Uterus (tissue), 4 donors: ENCODE measurements at regions of chr22 and their contacts with region 1.

Region 1: GRCh38 chr22:23925020-23925606 is 30.9 kb downstream of the MIF start:
- DNase-seq: no peak
- H3K4me3 ChIP-seq: no peak overlapping the region
- H3K27ac ChIP-seq: no peak overlapping the region
- H3K4me1 ChIP-seq: no peaks in the 10 kb centered on the region
- H3K27me3 ChIP-seq: no peaks in the 10 kb centered on the region
- CTCF ChIP-seq: no peak
- POLR2A ChIP-seq: no peak

Region 2: DNA sequence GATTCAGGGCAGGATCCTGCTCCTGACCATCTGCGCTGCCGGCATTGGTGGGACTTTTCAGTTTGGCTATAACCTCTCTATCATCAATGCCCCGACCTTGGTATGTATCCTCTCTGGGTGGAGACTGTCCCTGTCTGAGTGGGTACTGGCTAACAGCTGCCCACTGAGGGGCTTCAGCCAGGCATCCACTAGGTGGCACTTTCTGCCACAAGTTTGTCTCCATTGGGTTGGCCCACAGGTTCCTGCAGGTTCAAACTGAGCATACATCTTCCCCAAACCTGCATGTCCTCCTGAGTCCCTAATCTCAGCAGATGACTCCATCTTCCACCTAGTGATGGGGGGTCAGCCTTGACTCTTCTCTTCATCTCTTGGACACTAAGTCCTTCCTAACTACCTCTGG is 63.0 kb before region 1 on chr22:
- intact Hi-C with region 1: no loop called
- DNase-seq: no peak
- H3K4me3 ChIP-seq: no peak overlapping the region
- H3K27ac ChIP-seq: no peak overlapping the region
- H3K4me1 ChIP-seq: no peaks in the 10 kb centered on the region
- H3K27me3 ChIP-seq: no peaks in the 10 kb centered on the region
- CTCF ChIP-seq: peak in 2 of 4 experiments; percentile 8 to 14
- POLR2A ChIP-seq: no peak

Region 3: DNA sequence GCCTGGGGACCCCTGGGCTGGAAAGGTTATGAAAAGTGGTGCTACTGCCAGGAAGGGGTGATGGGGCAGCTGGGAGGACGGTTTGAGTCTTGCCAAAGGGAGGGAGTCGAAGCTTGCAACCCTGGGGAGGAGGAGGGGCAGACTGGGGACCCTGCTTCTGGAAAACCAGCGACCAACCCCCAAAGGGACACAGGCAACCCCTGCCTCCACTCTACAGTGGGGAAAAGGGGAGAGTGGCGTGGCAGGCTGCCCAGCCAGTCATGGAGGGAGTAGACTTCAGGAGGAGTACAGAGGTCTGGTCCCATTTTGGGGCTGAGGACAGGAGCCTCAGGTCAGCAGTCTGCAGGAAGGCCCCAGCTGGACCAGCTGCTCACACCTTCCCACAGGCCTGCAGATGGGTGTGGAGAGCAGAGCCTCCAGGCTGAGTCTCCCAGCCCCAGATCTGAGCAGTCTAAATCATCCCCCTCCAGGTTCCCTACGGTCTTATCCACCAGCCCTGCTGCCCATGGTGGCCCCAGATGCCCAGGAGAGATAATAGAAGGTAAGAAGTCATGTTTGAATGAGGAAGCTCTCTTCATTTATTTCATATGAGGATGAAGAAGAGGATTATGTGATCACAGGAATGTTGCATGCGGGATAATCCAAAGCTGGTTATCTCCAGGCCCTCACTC is 45.8 kb after region 1 on chr22:
- intact Hi-C with region 1: loop called (anchors 5 kb)
- DNase-seq: no peak
- H3K4me3 ChIP-seq: no peak overlapping the region
- H3K27ac ChIP-seq: no peak overlapping the region
- H3K4me1 ChIP-seq: no peaks in the 10 kb centered on the region
- H3K27me3 ChIP-seq: no peaks in the 10 kb centered on the region
- CTCF ChIP-seq: no peak
- POLR2A ChIP-seq: no peak